ENCODE measurements at regions of chr7 and their contacts with region 1.

Region 1: GRCh38 chr7:22110227-22110839 is 164.6 kb upstream of the CDCA7L start:
- DNase-seq: no peak

Region 2: GRCh38 chr7:22127835-22128527 is 17.6 kb after region 1 on chr7:
- intact Hi-C with region 1: loop called (anchors 2 kb)
- DNase-seq: no peak

Region 3: GRCh38 chr7:22193450-22193983 is 83.2 kb after region 1 on chr7:
- intact Hi-C with region 1: no loop called
- DNase-seq: no peak

Region 4: GRCh38 chr7:22255834-22256233 is 145.5 kb after region 1 on chr7:
- intact Hi-C with region 1: loop called (anchors 5 kb)
- DNase-seq: no peak

Region 5: DNA sequence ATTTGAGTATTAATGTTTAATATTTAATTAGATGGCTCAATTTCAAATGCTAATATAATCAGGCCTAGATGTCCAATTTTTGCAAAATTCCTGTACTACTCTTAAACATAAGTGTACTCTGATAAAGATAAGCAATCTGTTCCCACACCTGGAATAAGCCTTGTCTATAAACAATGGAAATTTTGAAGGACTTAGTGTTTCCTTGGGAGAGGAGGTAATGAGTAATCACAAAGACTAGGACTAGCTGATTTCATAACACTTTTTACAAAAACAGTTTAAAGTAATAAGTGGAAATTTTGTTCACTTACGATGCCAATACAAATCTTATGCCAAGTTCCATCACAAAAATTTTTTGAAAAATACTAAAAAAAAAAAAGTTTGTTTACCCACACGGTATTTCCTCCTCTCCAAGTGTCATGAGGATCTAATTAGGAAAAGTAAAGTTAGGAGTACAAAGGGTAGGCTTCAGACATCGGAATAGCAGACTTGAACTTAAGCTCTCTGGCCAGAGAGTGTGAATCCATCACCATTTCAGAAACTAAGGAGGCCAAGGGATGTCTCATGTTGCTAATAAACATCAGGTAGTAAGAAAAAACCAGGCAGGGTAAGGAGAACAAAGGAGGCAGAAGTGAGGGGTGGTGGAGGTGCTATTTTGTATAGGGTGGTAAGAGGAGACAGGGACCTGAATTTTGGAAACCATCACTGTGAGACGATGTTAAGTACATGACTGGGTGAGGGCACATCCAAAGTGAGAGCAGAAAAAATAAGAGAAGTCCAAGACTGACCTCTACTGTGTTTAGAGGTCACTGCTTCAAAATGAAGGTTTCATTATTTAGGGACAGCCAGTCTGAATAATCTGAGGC is 185.3 kb after region 1 on chr7:
- intact Hi-C with region 1: loop called (anchors 2 kb)
- DNase-seq: no peak

Region 6: DNA sequence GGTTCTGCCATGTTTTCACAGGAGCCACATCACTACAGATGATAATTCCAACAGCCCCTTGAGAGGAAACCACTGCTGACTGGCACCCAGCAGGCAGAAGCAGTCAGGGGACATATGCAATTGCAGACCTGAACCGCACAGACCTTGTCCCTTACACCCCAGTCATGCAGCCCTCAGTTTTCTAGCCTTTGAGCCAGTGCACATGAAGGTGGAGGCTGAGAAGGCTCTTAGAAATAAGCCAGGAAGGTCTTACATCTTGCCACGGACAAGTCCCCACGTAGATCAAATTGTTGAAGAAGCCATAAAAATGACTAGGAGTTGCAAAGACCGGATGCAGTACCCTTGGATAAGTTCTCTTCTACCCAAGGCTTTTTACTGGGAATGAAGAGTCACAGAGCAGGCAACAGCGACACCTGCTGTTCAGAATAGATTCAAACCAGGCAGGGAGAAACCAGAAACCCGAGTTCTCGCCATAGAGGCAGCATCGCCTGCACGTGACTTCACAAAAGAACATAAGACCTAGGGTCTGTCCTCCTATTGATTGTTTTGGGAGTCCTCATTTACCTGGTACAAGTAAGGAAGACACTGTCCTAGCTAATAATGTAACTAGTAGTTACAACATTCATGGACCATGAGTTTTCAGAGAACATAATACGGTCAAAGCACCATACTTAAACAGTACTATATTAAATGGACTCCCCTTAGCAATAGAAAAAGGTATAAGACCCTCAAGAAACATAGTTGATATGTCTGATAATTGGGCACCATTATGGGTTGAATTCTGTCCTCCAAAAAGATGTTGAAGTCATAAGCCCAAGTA is 378.5 kb after region 1 on chr7:
- intact Hi-C with region 1: loop called (anchors 1 kb)
- DNase-seq: no peak

Measured in cardiac septum (tissue), 1 donor.